ENCODE measurements at regions of chr20 and their contacts with region 1.

Region 1: GRCh38 chr20:3995067-3995748 is 20.1 kb downstream of the RNF24 start:
- DNase-seq: peak; percentile 50
- H3K4me3 Mint-ChIP-seq: peak overlapping the region; percentile 42
- H3K27ac Mint-ChIP-seq: peak overlapping the region; percentile 84
- H3K4me1 Mint-ChIP-seq: peaks cover 51% of the 10 kb centered on the region
- H3K27me3 Mint-ChIP-seq: no peaks in the 10 kb centered on the region

Region 2: DNA sequence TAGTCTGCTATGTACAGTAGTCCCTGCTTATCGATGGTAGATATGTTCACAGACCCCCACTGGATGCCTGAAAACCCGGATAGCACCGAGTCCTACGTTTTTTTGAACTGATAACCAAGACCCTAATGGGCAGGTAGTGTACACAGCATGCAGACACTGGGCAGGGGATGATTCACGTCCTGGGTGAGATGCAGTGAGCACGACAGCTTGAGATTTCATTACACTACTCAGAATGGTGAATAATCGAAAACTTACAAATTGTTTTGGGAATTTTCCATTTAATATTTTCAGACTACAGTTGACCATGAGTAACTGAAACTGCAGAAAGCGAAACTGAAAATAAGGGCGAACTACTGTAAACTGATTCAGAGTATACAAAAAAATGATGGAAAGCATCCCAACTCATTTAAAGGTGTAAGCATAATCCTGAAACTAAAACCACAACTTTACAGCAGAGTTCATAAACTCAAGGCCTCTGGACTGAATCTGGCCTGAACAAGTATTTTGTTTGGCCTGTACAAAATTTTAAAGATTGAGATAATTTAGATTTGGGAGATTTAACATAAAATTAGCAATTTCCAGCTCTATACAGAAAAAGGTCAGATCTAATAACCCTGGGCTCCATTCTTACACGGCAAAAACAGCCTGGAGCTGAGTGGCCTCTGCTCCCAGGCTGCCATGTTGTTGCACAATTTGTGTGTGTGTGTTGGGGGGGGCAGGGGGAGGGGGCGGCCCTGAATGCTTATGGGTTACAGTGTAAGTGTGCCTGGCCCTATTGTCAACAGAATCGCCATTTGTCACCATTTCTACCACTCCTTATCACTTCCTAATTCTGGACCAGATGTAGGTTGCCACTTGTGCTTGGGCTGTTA is 14.7 kb before region 1 on chr20:
- CTCF ChIA-PET with region 1: no interaction called
- POLR2A ChIA-PET with region 1: interaction called, 4 read pairs
- intact Hi-C with region 1: loop called (anchors 1 kb)
- DNase-seq: peak; percentile 70
- H3K4me3 Mint-ChIP-seq: peak overlapping the region; percentile 63
- H3K27ac Mint-ChIP-seq: peak overlapping the region; percentile 87
- H3K4me1 Mint-ChIP-seq: peaks cover 19% of the 10 kb centered on the region
- H3K27me3 Mint-ChIP-seq: no peaks in the 10 kb centered on the region

Region 3: DNA sequence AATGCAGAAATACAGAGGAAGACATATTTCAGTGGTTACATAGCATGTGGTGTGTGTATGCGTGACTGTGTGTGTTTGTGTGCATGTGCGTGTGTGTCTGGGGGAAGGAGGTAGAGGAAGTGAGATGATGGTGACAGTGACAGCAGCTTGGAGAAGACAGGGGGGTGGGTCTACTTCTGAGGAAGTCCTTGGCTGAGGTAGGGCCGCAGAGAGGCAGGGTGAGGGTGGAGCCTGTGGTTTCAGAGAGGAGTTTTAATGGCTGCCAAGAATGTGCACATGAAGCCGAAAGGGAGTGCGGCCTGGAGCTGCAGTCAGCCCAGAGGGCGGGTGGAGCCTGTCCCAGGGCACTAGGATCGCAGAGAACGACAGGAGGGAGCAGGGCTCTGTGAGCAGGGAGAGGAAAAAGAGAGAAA is 42.8 kb after region 1 on chr20:
- CTCF ChIA-PET with region 1: no interaction called
- POLR2A ChIA-PET with region 1: no interaction called
- intact Hi-C with region 1: loop called (anchors 1 kb)
- DNase-seq: peak; percentile 89
- H3K4me3 Mint-ChIP-seq: peak overlapping the region; percentile 70
- H3K27ac Mint-ChIP-seq: peak overlapping the region; percentile 89
- H3K4me1 Mint-ChIP-seq: peaks cover 18% of the 10 kb centered on the region
- H3K27me3 Mint-ChIP-seq: no peaks in the 10 kb centered on the region

Region 4: GRCh38 chr20:4470375-4470774 is 475.2 kb after region 1 on chr20:
- CTCF ChIA-PET with region 1: no interaction called
- POLR2A ChIA-PET with region 1: no interaction called
- intact Hi-C with region 1: no loop called
- DNase-seq: no peak
- H3K4me3 Mint-ChIP-seq: no peak overlapping the region
- H3K27ac Mint-ChIP-seq: no peak overlapping the region
- H3K4me1 Mint-ChIP-seq: no peaks in the 10 kb centered on the region
- H3K27me3 Mint-ChIP-seq: peaks cover 4% of the 10 kb centered on the region

Measured in activated CD4-positive, alpha-beta memory T cell treated with anti-CD3 and anti-CD28 coated beads for 36 hours (primary cell).